Heart right ventricle (tissue), 16 donors: ENCODE measurements at regions of chr9 and their contacts with region 1.

Region 1: DNA sequence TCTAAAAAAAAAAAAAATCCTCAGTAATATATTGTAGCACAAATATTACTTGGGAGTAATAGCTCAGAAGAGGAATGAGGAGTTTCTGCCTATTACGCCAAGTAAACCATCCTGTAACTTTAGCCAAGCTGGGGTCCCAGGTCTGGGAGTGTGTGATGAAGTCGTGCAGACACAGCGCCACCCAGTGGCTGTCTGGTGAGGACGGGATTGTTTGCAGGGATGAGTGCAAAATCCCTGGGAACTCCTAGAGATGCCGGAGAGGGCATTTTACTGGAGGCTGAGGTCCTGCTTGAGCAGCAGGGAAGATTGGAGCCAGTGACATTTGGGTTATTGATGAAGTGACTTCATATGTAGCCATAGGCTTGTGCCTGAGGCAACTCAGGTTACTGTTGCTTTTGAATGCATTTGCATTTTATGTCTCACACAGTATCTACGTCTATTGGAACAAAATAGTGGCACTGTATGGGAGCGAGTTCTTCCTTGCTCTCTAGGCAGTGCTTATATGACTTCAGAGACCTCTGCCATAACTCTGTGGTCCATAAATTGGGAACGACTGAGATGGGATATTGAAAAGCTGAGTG is 72.8 kb downstream of the PSAT1 start:
- DNase-seq: peak; percentile 36 to 67
- ATAC-seq: peak in 4 of 8 donors; percentile 47 to 72 (median 58)
- H3K4me3 ChIP-seq: no peak overlapping the region
- H3K27ac ChIP-seq: no peak overlapping the region
- H3K4me1 ChIP-seq: no peaks in the 10 kb centered on the region
- H3K27me3 ChIP-seq: peaks cover 0 to 53% (median 27%) of the 10 kb centered on the region in 7 donors
- CTCF ChIP-seq: peak; percentile 50 to 84 (median 72)

Region 2: GRCh38 chr9:78261403-78262001 is 108.2 kb before region 1 on chr9:
- intact Hi-C with region 1: loop called in 8 of 10 experiments (anchors 1 to 10 kb)
- DNase-seq: no peak
- ATAC-seq: no peak
- H3K4me3 ChIP-seq: no peak overlapping the region
- H3K27ac ChIP-seq: no peak overlapping the region
- H3K4me1 ChIP-seq: no peaks in the 10 kb centered on the region
- H3K27me3 ChIP-seq: no peaks in the 10 kb centered on the region
- CTCF ChIP-seq: peak; percentile 36 to 74 (median 67)

Region 3: GRCh38 chr9:78428640-78429039 is 58.9 kb after region 1 on chr9:
- intact Hi-C with region 1: loop called in 2 of 10 experiments (anchors 10 kb)
- DNase-seq: no peak
- ATAC-seq: no peak
- H3K4me3 ChIP-seq: no peak overlapping the region
- H3K27ac ChIP-seq: no peak overlapping the region
- H3K4me1 ChIP-seq: no peaks in the 10 kb centered on the region
- H3K27me3 ChIP-seq: peaks cover 0 to 4% (median 0%) of the 10 kb centered on the region in 7 donors
- CTCF ChIP-seq: no peak

Region 4: GRCh38 chr9:78439190-78439865 is 69.6 kb after region 1 on chr9:
- intact Hi-C with region 1: loop called in 1 of 10 experiments (anchors 10 kb)
- DNase-seq: peak; percentile 66 to 75
- ATAC-seq: peak; percentile 52 to 88 (median 80)
- H3K4me3 ChIP-seq: peak overlapping the region in 2 of 10 donors; percentile 18 to 25
- H3K27ac ChIP-seq: no peak overlapping the region
- H3K4me1 ChIP-seq: peaks cover 0 to 9% (median 3%) of the 10 kb centered on the region in 9 donors
- H3K27me3 ChIP-seq: peaks cover 0 to 41% (median 7%) of the 10 kb centered on the region in 7 donors
- CTCF ChIP-seq: peak; percentile 86 to 97 (median 91)

Region 5: DNA sequence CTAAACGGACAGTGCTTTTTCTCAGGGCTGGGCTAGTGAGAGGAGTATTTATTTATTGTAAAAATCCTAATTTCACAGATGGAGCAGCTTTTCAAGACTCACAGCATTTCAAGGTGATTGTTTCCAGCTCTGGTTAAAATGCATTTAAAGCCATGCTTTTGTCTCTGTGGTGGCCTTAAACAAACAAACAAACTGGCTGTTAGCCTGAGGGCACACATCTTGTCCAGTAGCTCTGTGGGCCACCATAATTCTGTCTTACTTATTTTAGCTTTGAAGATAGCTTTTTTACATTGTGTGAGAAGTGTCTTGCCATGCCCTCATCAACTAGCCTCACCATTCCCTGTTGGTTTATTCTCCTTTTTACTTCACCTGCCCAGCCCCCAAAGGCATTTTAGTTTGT is 145.4 kb after region 1 on chr9:
- intact Hi-C with region 1: no loop called
- DNase-seq: no peak
- ATAC-seq: no peak
- H3K4me3 ChIP-seq: no peak overlapping the region
- H3K27ac ChIP-seq: no peak overlapping the region
- H3K4me1 ChIP-seq: no peaks in the 10 kb centered on the region
- H3K27me3 ChIP-seq: no peaks in the 10 kb centered on the region
- CTCF ChIP-seq: no peak